RWPE1 (cell line): ENCODE measurements at regions of chr18 and their contacts with region 1.

Region 1: GRCh38 chr18:63578357-63578958 is 8.7 kb upstream of the SERPINB13 start:
- DNase-seq: no peak
- H3K27ac ChIP-seq: no peak overlapping the region
- CTCF ChIP-seq: peak; percentile 76

Region 2: DNA sequence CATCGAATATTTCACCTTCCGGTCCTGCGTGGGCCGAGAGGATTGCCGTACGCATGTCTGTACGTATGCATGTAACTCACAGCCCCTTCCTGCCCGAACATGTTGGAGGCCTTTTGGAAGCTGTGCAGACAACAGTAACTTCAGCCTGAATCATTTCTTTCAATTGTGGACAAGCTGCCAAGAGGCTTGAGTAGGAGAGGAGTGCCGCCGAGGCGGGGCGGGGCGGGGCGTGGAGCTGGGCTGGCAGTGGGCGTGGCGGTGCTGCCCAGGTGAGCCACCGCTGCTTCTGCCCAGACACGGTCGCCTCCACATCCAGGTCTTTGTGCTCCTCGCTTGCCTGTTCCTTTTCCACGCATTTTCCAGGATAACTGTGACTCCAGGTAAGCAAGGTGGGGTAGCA is 101.8 kb before region 1 on chr18 and contains the start of gene SERPINB5:
- CTCF ChIA-PET with region 1: no interaction called
- POLR2A ChIA-PET with region 1: no interaction called
- DNase-seq: peak; percentile 84
- H3K27ac ChIP-seq: peak within 1 kb of the TSS; percentile 93
- CTCF ChIP-seq: no peak

Region 3: GRCh38 chr18:63518178-63519012 is 60.1 kb before region 1 on chr18:
- CTCF ChIA-PET with region 1: interaction called, 19 read pairs
- POLR2A ChIA-PET with region 1: no interaction called
- DNase-seq: peak; percentile 50
- H3K27ac ChIP-seq: no peak overlapping the region
- CTCF ChIP-seq: peak; percentile 71